ENCODE measurements at regions of chr11 and their contacts with region 1.

Region 1: GRCh38 chr11:63478896-63479295 is 12.1 kb downstream of the PLAAT5 start:
- DNase-seq: peak; percentile 42 to 54
- H3K4me3 ChIP-seq: no peak overlapping the region
- H3K27ac ChIP-seq: no peak overlapping the region
- H3K4me1 ChIP-seq: no peaks in the 10 kb centered on the region
- H3K27me3 ChIP-seq: no peaks in the 10 kb centered on the region
- CTCF ChIP-seq: peak; percentile 77 to 96 (median 92)
- POLR2A ChIP-seq: no peak

Region 2: GRCh38 chr11:63032457-63032856 is 446.4 kb before region 1 on chr11:
- intact Hi-C with region 1: no loop called
- DNase-seq: no peak
- H3K4me3 ChIP-seq: no peak overlapping the region
- H3K27ac ChIP-seq: no peak overlapping the region
- H3K4me1 ChIP-seq: no peaks in the 10 kb centered on the region
- H3K27me3 ChIP-seq: no peaks in the 10 kb centered on the region
- CTCF ChIP-seq: no peak
- POLR2A ChIP-seq: no peak

Region 3: GRCh38 chr11:63567044-63567840 is 88.3 kb after region 1 on chr11:
- intact Hi-C with region 1: no loop called
- DNase-seq: peak; percentile 67 to 77
- H3K4me3 ChIP-seq: no peak overlapping the region
- H3K27ac ChIP-seq: peak overlapping the region; percentile 39 to 92 (median 67)
- H3K4me1 ChIP-seq: peaks cover 28 to 38% of the 10 kb centered on the region in 2 donors
- H3K27me3 ChIP-seq: no peaks in the 10 kb centered on the region
- CTCF ChIP-seq: no peak
- POLR2A ChIP-seq: peak in 1 of 2 donors; percentile 21

Region 4: GRCh38 chr11:63635762-63636465 is 157.0 kb after region 1 on chr11:
- intact Hi-C with region 1: loop called (anchors 2 kb)
- DNase-seq: peak; percentile 70 to 71
- H3K4me3 ChIP-seq: no peak overlapping the region
- H3K27ac ChIP-seq: no peak overlapping the region
- H3K4me1 ChIP-seq: peaks cover 0 to 6% of the 10 kb centered on the region in 2 donors
- H3K27me3 ChIP-seq: no peaks in the 10 kb centered on the region
- CTCF ChIP-seq: peak; percentile 35 to 97 (median 84)
- POLR2A ChIP-seq: no peak